Spleen (tissue), 13 donors: ENCODE measurements at regions of chr4 and their contacts with region 1.

Region 1: DNA sequence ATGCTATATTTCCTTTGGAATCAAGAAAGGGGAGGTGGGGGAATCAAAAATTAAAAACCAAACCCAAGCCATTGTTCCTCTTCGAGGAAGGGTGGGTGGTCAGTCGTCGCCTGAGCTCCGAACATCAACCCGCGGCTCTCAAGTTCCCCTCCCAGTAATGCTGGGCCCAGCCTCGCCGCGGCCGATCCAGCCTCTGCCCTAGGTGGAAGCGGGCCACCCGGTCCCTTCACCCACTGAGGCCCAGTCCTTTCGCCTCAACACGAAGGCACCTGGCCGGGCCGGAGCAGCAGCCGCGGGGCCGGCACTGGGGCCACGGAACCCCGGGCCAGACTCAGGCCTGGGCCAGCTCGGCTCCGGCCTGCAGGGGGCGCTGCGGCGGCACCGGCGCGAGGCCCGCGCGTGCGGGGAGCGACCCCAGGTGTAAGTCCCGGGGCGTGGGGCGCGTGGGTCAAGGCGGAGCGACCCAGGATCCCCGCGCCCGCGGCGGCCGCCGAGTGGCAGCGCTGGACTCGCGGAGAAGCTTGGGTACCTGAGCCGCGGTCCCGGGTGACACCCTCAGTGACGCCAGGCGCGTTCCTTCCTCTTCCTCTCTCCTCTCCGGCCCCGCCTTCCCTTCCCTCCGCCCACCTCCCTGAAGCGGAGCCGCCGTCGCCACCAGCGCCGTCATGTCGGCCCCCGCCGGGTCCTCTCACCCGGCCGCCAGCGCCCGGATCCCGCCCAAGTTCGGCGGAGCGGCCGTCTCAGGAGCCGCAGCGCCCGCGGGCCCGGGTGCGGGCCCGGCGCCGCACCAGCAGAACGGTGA is at the start of gene SEC24B:
- DNase-seq: peak; percentile 99
- H3K4me3 ChIP-seq: peak within 1 kb of the TSS; percentile 70 to 90 (median 75)
- H3K27ac ChIP-seq: peak within 1 kb of the TSS; percentile 92 to 98 (median 96)
- H3K4me1 ChIP-seq: peaks cover 28 to 58% (median 54%) of the 10 kb centered on the region in 6 donors
- H3K27me3 ChIP-seq: no peaks in the 10 kb centered on the region
- CTCF ChIP-seq: peak; percentile 39 to 99 (median 87)
- POLR2A ChIP-seq: peak in 1 of 3 donors; percentile 62
- total RNA-seq, gene SEC24B: 29.9 to 42.9 (median 35.1) TPM

Region 2: GRCh38 chr4:109554971-109555370 is 121.6 kb after region 1 on chr4:
- intact Hi-C with region 1: loop called (anchors 5 kb)
- DNase-seq: no peak
- H3K4me3 ChIP-seq: no peak overlapping the region
- H3K27ac ChIP-seq: no peak overlapping the region
- H3K4me1 ChIP-seq: peaks cover 0 to 15% (median 8%) of the 10 kb centered on the region in 6 donors
- H3K27me3 ChIP-seq: peaks cover 0 to 6% (median 0%) of the 10 kb centered on the region in 7 donors
- CTCF ChIP-seq: no peak
- POLR2A ChIP-seq: no peak

Region 3: DNA sequence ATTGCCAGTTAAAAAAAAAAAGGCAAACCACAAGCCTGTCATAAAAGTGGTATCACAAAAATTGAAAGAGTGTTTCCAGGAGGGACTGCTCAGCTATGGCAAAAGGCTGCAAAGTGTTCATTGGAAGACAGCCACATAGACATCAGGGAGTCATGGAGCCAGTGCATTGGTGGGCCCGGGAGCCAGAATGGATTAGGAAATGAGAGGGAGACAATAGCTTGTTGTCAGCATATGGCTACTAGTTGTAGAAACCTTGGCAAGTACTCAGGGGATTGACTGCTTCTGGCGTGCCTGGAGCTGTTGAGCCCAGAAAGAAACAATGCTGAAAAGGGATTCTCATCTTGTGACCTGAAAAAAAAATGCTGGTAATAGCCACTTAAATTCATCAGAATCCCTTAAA is 387.2 kb after region 1 on chr4:
- intact Hi-C with region 1: loop called (anchors 5 kb)
- DNase-seq: no peak
- H3K4me3 ChIP-seq: no peak overlapping the region
- H3K27ac ChIP-seq: no peak overlapping the region
- H3K4me1 ChIP-seq: peaks cover 6 to 33% (median 19%) of the 10 kb centered on the region in 6 donors
- H3K27me3 ChIP-seq: no peaks in the 10 kb centered on the region
- CTCF ChIP-seq: no peak
- POLR2A ChIP-seq: no peak